Spleen (tissue), 13 donors: ENCODE measurements at regions of chr3 and their contacts with region 1.

Region 1: DNA sequence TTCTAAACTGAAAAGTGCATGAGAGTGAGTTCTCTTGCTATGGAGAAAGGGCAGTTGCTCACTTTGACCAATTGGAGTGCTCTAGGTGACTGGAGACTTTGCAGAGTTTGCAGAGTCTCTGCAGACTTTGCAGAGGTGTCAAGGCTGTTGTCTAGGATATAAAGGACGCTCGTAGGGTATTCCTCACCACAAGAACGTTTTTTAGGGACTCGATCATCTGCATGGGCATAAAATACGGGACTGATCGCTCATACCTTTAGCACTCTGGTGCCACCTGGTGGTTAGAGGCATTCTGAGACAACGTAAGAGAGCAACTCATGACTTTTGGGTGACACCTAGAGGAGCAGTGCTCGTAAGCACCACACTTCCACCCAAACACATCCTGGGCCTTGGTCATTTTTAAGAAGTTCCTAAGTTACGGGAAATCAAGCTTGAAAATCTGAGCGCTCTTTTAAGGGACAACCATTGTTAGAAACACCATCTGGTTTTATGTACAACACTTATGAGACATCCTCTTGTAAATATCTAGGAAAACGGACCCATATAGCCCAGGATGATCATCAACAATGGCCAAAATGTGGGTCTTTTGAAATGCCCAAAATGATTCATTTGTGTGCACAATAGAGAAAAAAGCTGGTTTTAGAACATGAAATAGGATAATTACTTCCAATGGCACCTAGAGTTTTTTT is 51.6 kb upstream of the XCR1 start:
- DNase-seq: peak; percentile 83
- H3K4me3 ChIP-seq: peak overlapping the region in 1 of 8 donors; percentile 33
- H3K27ac ChIP-seq: peak overlapping the region in 2 of 8 donors; percentile 17 to 27
- H3K4me1 ChIP-seq: peaks cover 0 to 25% (median 9%) of the 10 kb centered on the region in 6 donors
- H3K27me3 ChIP-seq: no peaks in the 10 kb centered on the region
- CTCF ChIP-seq: peak; percentile 91 to 99 (median 96)
- POLR2A ChIP-seq: no peak

Region 2: DNA sequence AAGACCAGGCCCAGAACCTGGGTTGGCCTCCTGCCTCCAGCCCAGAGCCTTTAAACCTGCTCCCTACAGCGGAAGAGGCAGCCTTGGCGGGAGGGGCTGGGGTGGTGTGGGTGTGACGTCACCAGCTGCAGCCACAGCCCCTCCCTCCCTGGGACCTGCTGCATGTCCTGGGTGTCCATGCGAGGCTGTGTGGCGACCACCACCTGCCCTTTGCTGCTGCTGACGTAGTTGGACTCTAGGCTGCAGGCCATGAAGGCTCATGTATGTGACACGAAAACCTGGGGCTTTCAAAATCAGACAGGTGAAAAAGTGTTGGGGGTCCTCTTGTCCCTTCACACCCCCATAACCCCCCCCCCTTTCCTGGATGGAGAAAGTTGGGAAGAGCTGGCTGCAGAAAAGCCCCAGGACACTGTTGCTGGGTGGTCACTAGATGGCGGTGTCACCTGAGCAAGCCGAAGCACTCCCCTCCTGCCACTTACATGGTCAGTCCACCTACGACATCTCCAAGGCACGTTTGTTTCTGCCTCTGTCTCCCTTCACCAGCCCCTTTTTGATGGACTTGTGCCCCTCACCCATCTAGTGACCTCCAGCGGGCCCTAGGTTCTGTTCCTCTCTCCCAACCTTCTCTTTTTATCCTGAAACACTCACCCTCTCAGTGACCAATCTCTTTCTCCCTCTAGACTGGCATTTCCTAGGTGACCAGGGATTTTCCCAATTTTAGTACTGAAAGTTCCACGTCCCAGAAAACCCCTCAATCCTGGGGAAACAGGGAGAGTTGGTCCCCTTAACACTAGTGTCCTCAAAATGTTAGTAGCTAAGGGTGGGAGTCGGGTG is 317.8 kb before region 1 on chr3:
- intact Hi-C with region 1: loop called (anchors 10 kb)
- DNase-seq: no peak
- H3K4me3 ChIP-seq: no peak overlapping the region
- H3K27ac ChIP-seq: no peak overlapping the region
- H3K4me1 ChIP-seq: peaks cover 0 to 8% (median 4%) of the 10 kb centered on the region in 6 donors
- H3K27me3 ChIP-seq: peaks cover 0 to 16% (median 0%) of the 10 kb centered on the region in 7 donors
- CTCF ChIP-seq: peak; percentile 22 to 79 (median 66)
- POLR2A ChIP-seq: no peak

Region 3: DNA sequence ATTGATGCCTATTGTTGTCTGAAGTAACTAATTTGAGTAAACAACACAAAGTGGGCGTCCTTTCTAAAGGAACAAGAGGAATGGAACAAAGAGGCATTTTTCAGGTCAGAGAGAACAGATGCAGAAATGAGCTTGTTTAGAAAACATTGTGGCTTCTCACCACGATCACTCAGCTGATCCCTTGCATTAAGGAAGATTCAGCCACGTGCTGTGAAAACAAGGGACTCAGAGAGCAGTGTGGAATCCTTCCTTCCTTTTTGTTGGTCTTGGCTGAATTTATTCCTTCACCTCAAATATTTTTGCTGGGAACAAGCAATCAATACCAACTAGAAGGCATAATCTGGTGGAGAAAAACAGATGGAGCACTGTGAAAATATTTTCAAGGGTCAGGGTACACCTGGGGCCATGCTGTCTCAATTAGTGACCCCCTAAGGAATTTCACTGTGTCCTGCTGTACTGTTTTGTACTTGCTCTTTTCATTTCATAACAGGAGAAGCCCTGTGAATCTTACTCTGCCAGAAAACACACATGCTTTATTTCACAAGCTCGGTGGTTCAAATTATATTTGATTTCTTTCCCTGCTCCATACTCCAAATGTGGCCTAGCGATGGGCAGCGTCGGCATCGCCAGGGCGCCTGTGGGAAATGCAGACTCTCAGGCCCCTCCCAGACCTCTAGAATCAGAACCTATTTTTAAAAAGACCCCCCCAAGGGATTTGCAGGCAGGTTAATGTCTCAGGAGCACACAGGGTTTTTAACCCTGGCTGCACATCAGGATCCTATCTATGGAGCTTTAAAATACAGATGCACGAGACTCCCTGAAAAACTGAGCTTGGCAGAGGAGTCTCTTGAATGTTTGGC is 270.9 kb before region 1 on chr3:
- intact Hi-C with region 1: no loop called
- DNase-seq: no peak
- H3K4me3 ChIP-seq: no peak overlapping the region
- H3K27ac ChIP-seq: no peak overlapping the region
- H3K4me1 ChIP-seq: no peaks in the 10 kb centered on the region
- H3K27me3 ChIP-seq: no peaks in the 10 kb centered on the region
- CTCF ChIP-seq: no peak
- POLR2A ChIP-seq: no peak

Region 4: GRCh38 chr3:45938864-45939263 is 140.0 kb before region 1 on chr3:
- intact Hi-C with region 1: loop called (anchors 2 kb)
- DNase-seq: peak; percentile 90
- H3K4me3 ChIP-seq: no peak overlapping the region
- H3K27ac ChIP-seq: peak overlapping the region in 4 of 8 donors; percentile 25 to 65 (median 47)
- H3K4me1 ChIP-seq: peaks cover 0 to 35% (median 15%) of the 10 kb centered on the region in 6 donors
- H3K27me3 ChIP-seq: no peaks in the 10 kb centered on the region
- CTCF ChIP-seq: peak; percentile 81 to 95 (median 90)
- POLR2A ChIP-seq: no peak

Region 5: GRCh38 chr3:46368569-46368968 is 289.7 kb after region 1 on chr3:
- intact Hi-C with region 1: loop called (anchors 5 kb)
- DNase-seq: peak; percentile 93
- H3K4me3 ChIP-seq: no peak overlapping the region
- H3K27ac ChIP-seq: peak overlapping the region in 5 of 8 donors; percentile 53 to 81 (median 66)
- H3K4me1 ChIP-seq: peaks cover 0 to 59% (median 22%) of the 10 kb centered on the region in 6 donors
- H3K27me3 ChIP-seq: no peaks in the 10 kb centered on the region
- CTCF ChIP-seq: peak in 10 of 11 experiments; percentile 26 to 74 (median 64)
- POLR2A ChIP-seq: no peak